GM10248 (cell line): ENCODE measurements at regions of chr22 and their contacts with region 1.

Region 1: DNA sequence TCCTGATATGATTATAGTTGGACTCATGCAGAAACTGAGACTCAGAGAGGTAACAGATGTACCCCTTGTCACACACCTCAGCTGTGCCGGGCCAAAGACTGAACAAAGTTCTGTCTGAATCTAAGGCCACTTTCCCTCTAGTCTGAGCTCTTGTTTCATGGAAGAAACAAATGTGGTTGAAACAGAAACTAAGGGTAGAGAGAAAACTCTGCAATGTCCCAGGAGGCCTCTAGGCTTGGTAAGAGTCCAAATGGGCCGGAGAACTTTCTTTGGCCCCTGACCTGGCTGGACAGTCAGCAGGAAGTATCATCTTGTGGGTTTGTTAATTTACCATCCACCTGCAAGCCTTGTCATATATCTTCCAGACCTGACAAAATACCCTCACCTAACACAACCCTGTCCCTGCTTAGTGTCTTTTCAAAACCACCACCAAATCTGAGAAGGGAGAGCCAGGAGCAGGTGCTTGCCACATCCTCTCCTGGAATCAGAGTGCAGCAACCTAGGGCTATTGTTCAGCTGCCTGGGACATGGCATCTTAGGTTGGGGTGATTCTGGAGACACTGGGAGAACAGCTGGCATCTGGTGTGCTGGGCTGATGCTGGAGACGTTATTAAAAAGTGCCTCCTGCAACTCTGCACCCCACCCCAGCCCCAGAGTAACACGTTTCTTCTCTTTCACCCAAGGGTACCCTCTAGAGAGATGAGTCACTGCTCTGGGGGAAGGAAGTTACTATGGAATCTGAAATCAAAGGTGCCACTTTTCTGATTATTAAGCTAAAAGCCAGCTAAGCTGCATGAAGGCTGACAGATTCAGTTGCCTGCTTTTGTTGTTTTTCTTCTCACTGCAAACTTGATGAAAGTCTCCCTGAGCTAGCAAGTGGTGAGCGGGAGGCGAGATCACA is 126.3 kb upstream of the TIMP3 start:
- DNase-seq: no peak
- CTCF ChIP-seq: no peak

Region 2: GRCh38 chr22:32660292-32660691 is 14.9 kb before region 1 on chr22:
- CTCF ChIA-PET with region 1: interaction called, 11 read pairs
- POLR2A ChIA-PET with region 1: no interaction called
- DNase-seq: peak; percentile 71
- CTCF ChIP-seq: peak; percentile 66

Region 3: DNA sequence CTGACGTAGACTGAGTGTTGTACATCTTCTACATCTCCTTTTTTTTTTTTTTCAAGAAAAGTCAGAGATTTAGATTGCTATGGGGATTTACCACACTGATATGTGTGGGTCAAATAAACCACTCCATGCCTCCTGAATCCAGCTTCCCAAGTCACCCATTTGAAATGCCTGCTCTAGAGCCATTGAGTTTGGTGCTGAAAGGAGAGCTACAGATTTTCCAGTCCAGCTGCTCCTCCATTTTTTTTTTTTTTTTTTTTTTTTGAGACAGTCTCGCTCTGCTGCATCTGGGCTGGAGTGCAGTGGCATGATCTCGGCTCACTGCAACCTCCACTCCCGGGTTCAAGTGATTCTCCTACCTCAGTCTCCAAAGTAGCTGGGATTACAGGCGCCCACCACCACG is 11.2 kb after region 1 on chr22:
- CTCF ChIA-PET with region 1: no interaction called
- POLR2A ChIA-PET with region 1: no interaction called
- DNase-seq: no peak
- CTCF ChIP-seq: no peak